ENCODE measurements at regions of chr14 and their contacts with region 1.

Region 1: GRCh38 chr14:75132382-75133086 is 5.7 kb upstream of the NEK9 start:
- DNase-seq: peak; percentile 79 to 87
- H3K4me3 ChIP-seq: no peak overlapping the region
- H3K27ac ChIP-seq: peak overlapping the region; percentile 33
- H3K4me1 ChIP-seq: peaks cover 29% of the 10 kb centered on the region
- H3K27me3 ChIP-seq: no peaks in the 10 kb centered on the region
- CTCF ChIP-seq: peak; percentile 96

Region 2: GRCh38 chr14:74893614-74894091 is 238.9 kb before region 1 on chr14:
- CTCF ChIA-PET with region 1: no interaction called
- POLR2A ChIA-PET with region 1: no interaction called
- intact Hi-C with region 1: no loop called
- DNase-seq: no peak
- H3K4me3 ChIP-seq: no peak overlapping the region
- H3K27ac ChIP-seq: no peak overlapping the region
- H3K4me1 ChIP-seq: peaks cover 11% of the 10 kb centered on the region
- H3K27me3 ChIP-seq: no peaks in the 10 kb centered on the region
- CTCF ChIP-seq: no peak

Region 3: DNA sequence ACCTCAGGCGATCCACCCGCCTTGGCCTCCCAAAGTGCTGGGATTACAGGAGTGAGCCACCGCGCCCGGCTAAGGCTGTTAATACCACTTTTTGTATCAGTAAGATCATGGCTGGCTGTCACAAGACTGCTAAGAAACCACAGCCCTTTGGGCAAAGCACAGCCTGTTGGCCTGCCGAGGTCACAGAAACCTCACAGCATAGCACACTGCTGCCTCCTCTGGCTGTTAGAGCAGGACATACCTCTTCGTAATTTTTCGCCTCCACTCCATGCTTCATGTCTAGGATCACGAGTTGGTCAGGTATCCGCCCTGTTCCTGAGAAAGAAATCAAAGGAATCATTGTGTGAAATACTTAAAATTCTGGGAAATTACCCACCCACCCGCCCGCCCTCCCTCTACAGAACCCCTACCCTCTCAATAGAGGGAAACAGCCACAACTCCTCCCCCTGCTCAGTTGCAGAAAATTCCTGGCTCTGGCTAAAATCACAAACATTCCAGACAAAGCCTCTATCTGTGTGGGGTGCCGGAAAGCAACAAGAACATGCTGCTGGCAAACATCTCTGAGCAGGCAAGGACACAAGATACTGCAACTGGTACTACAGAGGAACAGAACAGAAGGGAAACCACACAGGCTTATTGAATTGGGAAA is 15.0 kb after region 1 on chr14:
- CTCF ChIA-PET with region 1: interaction called, 6 read pairs
- POLR2A ChIA-PET with region 1: interaction called, 14 read pairs
- intact Hi-C with region 1: no loop called
- DNase-seq: no peak
- H3K4me3 ChIP-seq: no peak overlapping the region
- H3K27ac ChIP-seq: no peak overlapping the region
- H3K4me1 ChIP-seq: no peaks in the 10 kb centered on the region
- H3K27me3 ChIP-seq: no peaks in the 10 kb centered on the region
- CTCF ChIP-seq: no peak

Region 4: DNA sequence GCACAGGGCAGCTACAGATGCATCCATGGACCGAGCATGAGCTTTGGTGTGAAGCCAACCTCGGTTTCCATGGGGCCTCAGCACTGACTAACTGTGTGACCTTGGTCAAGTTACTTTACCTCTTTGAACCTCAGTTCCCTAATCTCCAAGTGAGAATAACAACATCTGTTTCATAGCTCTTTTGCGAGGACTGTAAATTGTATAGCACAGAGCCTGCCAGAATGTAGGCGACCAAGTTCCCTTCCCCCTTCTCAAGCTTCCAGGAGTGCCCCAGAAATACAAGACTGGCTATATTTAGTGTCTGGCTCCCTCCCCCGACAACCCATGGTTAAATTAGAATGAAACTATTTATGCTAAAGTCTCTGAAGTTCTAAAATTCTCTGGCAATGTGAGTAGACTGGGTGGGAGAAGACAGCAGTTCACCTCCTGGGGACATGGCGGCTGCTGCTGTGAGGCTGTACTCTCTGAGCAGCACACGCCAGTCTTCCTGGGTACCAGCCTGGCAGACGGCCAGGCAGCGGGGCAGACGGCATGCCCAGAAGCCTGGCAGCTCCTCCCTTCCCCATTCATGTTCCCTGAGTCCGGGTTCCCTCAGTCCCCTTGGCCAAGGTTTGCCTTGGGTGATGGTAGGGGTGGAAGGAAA is 65.9 kb after region 1 on chr14:
- CTCF ChIA-PET with region 1: interaction called, 3 read pairs
- POLR2A ChIA-PET with region 1: no interaction called
- intact Hi-C with region 1: loop called (anchors 2 kb)
- DNase-seq: no peak
- H3K4me3 ChIP-seq: no peak overlapping the region
- H3K27ac ChIP-seq: no peak overlapping the region
- H3K4me1 ChIP-seq: peaks cover 56% of the 10 kb centered on the region
- H3K27me3 ChIP-seq: no peaks in the 10 kb centered on the region
- CTCF ChIP-seq: no peak

Region 5: DNA sequence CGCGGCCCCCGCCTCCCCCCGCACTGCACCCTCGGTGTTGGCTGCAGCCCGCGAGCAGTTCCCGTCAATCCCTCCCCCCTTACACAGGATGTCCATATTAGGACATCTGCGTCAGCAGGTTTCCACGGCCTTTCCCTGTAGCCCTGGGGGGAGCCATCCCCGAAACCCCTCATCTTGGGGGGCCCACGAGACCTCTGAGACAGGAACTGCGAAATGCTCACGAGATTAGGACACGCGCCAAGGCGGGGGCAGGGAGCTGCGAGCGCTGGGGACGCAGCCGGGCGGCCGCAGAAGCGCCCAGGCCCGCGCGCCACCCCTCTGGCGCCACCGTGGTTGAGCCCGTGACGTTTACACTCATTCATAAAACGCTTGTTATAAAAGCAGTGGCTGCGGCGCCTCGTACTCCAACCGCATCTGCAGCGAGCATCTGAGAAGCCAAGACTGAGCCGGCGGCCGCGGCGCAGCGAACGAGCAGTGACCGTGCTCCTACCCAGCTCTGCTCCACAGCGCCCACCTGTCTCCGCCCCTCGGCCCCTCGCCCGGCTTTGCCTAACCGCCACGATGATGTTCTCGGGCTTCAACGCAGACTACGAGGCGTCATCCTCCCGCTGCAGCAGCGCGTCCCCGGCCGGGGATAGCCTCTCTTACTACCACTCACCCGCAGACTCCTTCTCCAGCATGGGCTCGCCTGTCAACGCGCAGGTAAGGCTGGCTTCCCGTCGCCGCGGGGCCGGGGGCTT is 146.1 kb after region 1 on chr14 and contains the start of gene FOS:
- CTCF ChIA-PET with region 1: interaction called, 3 read pairs
- POLR2A ChIA-PET with region 1: interaction called, 12 read pairs
- intact Hi-C with region 1: loop called (anchors 1 kb)
- DNase-seq: peak; percentile 92 to 98
- H3K4me3 ChIP-seq: peak within 1 kb of the TSS; percentile 90
- H3K27ac ChIP-seq: peak within 1 kb of the TSS; percentile 95
- H3K4me1 ChIP-seq: peaks cover 51% of the 10 kb centered on the region
- H3K27me3 ChIP-seq: no peaks in the 10 kb centered on the region
- CTCF ChIP-seq: no peak
- total RNA-seq, gene FOS: 84.6 and 154 TPM in 2 replicates

Region 6: DNA sequence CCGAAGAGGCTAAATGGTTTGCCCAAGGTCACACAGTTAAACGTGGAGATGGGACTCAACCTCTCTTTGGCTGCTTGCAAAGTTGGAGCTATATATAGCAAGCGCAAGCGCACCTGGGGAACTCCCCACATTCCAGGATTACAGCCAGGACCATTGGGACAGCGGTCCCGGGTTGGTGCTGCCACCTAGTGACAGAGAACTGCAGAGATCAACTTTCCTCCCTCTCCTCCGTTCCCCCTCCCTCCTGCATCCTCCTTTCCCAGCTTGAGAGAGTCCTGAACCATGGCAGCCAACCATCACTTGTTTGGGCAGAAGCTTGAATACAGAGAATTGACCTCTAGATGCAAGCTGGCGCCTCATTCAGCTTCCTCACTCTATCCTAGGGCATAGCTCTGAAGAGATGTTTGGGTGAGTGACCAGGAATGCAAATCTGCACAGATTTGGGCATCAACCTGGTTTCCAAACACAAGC is 428.5 kb after region 1 on chr14:
- CTCF ChIA-PET with region 1: interaction called, 6 read pairs
- POLR2A ChIA-PET with region 1: no interaction called
- intact Hi-C with region 1: loop called (anchors 1 kb)
- DNase-seq: peak; percentile 90 to 98
- H3K4me3 ChIP-seq: no peak overlapping the region
- H3K27ac ChIP-seq: peak overlapping the region; percentile 89
- H3K4me1 ChIP-seq: peaks cover 57% of the 10 kb centered on the region
- H3K27me3 ChIP-seq: no peaks in the 10 kb centered on the region
- CTCF ChIP-seq: peak; percentile 99

Region 7: GRCh38 chr14:75906676-75907280 is 774.2 kb after region 1 on chr14:
- CTCF ChIA-PET with region 1: interaction called, 30 read pairs
- POLR2A ChIA-PET with region 1: no interaction called
- intact Hi-C with region 1: no loop called
- DNase-seq: peak; percentile 60 to 64
- H3K4me3 ChIP-seq: no peak overlapping the region
- H3K27ac ChIP-seq: no peak overlapping the region
- H3K4me1 ChIP-seq: no peaks in the 10 kb centered on the region
- H3K27me3 ChIP-seq: no peaks in the 10 kb centered on the region
- CTCF ChIP-seq: peak; percentile 100